CD14-positive monocyte (primary cell): ENCODE measurements at regions of chr20 and their contacts with region 1.

Region 1: GRCh38 chr20:53939572-53940359 is 130.6 kb downstream of the BCAS1 start:
- DNase-seq: peak; percentile 90 to 96 (median 96)
- H3K4me3 ChIP-seq: peak overlapping the region in 2 of 3 experiments; percentile 8 to 61
- H3K4me3 Mint-ChIP-seq: peak overlapping the region; percentile 60 to 63
- H3K27ac ChIP-seq: peak overlapping the region; percentile 2 to 90
- H3K27ac Mint-ChIP-seq: peak overlapping the region; percentile 80 to 94 (median 91)
- H3K4me1 ChIP-seq: peaks cover 81 to 87% of the 10 kb centered on the region in 2 donors
- H3K4me1 Mint-ChIP-seq: peaks cover 84% of the 10 kb centered on the region
- H3K27me3 ChIP-seq: no peaks in the 10 kb centered on the region
- H3K27me3 Mint-ChIP-seq: peaks cover 0 to 2% (median 2%) of the 10 kb centered on the region in 3 donors
- CTCF ChIP-seq: peak; percentile 86

Region 2: GRCh38 chr20:53738039-53738944 is 201.5 kb before region 1 on chr20:
- intact Hi-C with region 1: loop called in 1 of 2 experiments (anchors 10 kb)
- DNase-seq: no peak
- H3K4me3 ChIP-seq: peak overlapping the region in 1 of 3 experiments; percentile 59
- H3K4me3 Mint-ChIP-seq: no peak overlapping the region
- H3K27ac ChIP-seq: peak overlapping the region in 1 of 2 donors; percentile 84
- H3K27ac Mint-ChIP-seq: peak overlapping the region; percentile 91 to 99 (median 95)
- H3K4me1 ChIP-seq: peaks cover 71 to 72% of the 10 kb centered on the region in 2 donors
- H3K4me1 Mint-ChIP-seq: peaks cover 74% of the 10 kb centered on the region
- H3K27me3 ChIP-seq: no peaks in the 10 kb centered on the region
- H3K27me3 Mint-ChIP-seq: peaks cover 0 to 2% (median 1%) of the 10 kb centered on the region in 3 donors
- CTCF ChIP-seq: no peak

Region 3: GRCh38 chr20:53828682-53829254 is 111.0 kb before region 1 on chr20:
- intact Hi-C with region 1: no loop called
- DNase-seq: peak in 1 of 3 donors; percentile 12
- H3K4me3 ChIP-seq: peak overlapping the region; percentile 19 to 70 (median 47)
- H3K4me3 Mint-ChIP-seq: peak overlapping the region; percentile 56 to 88
- H3K27ac ChIP-seq: peak overlapping the region; percentile 32 to 92
- H3K27ac Mint-ChIP-seq: peak overlapping the region; percentile 1 to 94 (median 85)
- H3K4me1 ChIP-seq: peaks cover 40 to 52% of the 10 kb centered on the region in 2 donors
- H3K4me1 Mint-ChIP-seq: peaks cover 52% of the 10 kb centered on the region
- H3K27me3 ChIP-seq: no peaks in the 10 kb centered on the region
- H3K27me3 Mint-ChIP-seq: peaks cover 0 to 3% (median 1%) of the 10 kb centered on the region in 3 donors
- CTCF ChIP-seq: no peak

Region 4: DNA sequence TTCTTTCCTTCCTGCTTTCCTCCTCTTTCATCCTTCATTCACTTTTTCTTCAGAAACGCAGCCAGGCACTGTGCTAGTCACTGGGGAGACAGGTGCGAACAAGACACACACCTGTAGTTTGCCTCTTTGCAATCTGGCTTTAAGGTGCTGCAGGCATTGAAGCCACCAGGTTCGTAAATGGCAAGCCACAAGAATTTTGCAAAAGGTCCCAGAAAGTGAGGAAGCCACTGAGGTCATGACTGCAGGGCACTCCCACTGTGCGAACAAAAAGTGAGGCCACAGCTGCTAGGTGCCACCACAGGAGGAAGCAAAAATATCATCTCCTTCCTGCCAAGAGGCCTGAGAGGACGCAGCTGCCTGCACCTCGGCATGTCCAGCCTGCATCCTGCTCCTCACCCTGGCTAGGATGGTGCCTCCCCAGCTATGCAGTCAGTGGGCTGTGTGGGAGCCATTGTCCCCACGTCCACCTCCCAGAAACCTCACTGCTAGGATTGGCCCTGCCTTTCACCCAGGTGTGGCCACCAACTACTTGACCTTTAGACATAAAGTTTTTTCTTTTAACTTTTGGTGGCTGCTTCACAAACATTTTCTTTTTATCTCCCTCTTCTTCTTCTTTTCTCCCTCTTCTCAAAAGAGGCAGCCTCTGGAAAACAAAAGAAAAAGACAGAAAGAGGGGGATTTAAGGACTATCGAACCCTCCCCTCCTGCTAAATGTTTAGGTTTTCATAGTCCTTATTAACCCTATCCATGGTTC is 100.2 kb before region 1 on chr20:
- intact Hi-C with region 1: loop called in 1 of 2 experiments (anchors 10 kb)
- DNase-seq: peak; percentile 71 to 72 (median 71)
- H3K4me3 ChIP-seq: peak overlapping the region in 1 of 3 experiments; percentile 61
- H3K4me3 Mint-ChIP-seq: peak overlapping the region; percentile 58 to 78
- H3K27ac ChIP-seq: peak overlapping the region; percentile 74 to 84
- H3K27ac Mint-ChIP-seq: peak overlapping the region; percentile 82 to 97 (median 93)
- H3K4me1 ChIP-seq: peaks cover 50 to 62% of the 10 kb centered on the region in 2 donors
- H3K4me1 Mint-ChIP-seq: peaks cover 55% of the 10 kb centered on the region
- H3K27me3 ChIP-seq: no peaks in the 10 kb centered on the region
- H3K27me3 Mint-ChIP-seq: peaks cover 0 to 7% (median 0%) of the 10 kb centered on the region in 3 donors
- CTCF ChIP-seq: no peak

Region 5: GRCh38 chr20:53905019-53905847 is 34.5 kb before region 1 on chr20:
- intact Hi-C with region 1: loop called in 1 of 2 experiments (anchors 5 kb)
- DNase-seq: no peak
- H3K4me3 ChIP-seq: no peak overlapping the region
- H3K4me3 Mint-ChIP-seq: no peak overlapping the region
- H3K27ac ChIP-seq: peak overlapping the region; percentile 94 to 98
- H3K27ac Mint-ChIP-seq: peak overlapping the region; percentile 98 to 100 (median 100)
- H3K4me1 ChIP-seq: peaks cover 87 to 89% of the 10 kb centered on the region in 2 donors
- H3K4me1 Mint-ChIP-seq: peaks cover 79% of the 10 kb centered on the region
- H3K27me3 ChIP-seq: no peaks in the 10 kb centered on the region
- H3K27me3 Mint-ChIP-seq: peaks cover 0 to 5% (median 0%) of the 10 kb centered on the region in 3 donors
- CTCF ChIP-seq: no peak

Region 6: DNA sequence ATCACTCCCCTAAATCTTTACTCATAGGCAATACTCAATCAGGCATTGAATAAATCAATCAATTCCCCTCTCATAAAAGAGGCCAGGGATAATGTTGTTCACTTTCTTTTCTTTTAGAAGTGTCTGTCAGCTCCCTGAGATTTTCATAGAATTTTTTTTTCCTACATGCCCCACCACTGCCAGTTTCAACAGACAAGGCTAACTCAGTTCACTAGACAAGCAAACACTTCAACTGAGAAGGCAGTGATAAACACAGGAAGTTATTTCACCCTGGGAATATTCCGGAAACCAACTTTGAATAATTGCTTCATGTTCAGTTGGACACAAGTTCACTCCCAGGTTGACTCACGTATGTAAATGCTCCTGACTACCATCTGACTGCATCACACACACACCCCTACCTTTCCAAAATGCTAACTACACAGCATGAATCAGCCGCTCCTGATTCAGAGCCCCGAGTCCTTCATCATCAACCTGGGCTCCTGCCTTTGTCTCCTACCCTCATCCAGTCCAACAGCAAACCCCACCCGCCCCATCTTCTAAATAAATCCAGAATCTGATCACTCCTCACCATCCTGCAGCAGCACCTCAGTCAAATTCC is 13.2 kb before region 1 on chr20:
- intact Hi-C with region 1: no loop called
- DNase-seq: peak; percentile 92 to 99 (median 98)
- H3K4me3 ChIP-seq: peak overlapping the region in 1 of 3 experiments; percentile 39
- H3K4me3 Mint-ChIP-seq: peak overlapping the region in 1 of 2 donors; percentile 72
- H3K27ac ChIP-seq: peak overlapping the region; percentile 79 to 92
- H3K27ac Mint-ChIP-seq: peak overlapping the region; percentile 82 to 96 (median 94)
- H3K4me1 ChIP-seq: peaks cover 78 to 92% of the 10 kb centered on the region in 2 donors
- H3K4me1 Mint-ChIP-seq: peaks cover 79% of the 10 kb centered on the region
- H3K27me3 ChIP-seq: no peaks in the 10 kb centered on the region
- H3K27me3 Mint-ChIP-seq: peaks cover 0 to 2% (median 2%) of the 10 kb centered on the region in 3 donors
- CTCF ChIP-seq: no peak

Region 7: GRCh38 chr20:54014293-54014926 is 74.6 kb after region 1 on chr20:
- intact Hi-C with region 1: no loop called
- DNase-seq: no peak
- H3K4me3 ChIP-seq: no peak overlapping the region
- H3K4me3 Mint-ChIP-seq: no peak overlapping the region
- H3K27ac ChIP-seq: no peak overlapping the region
- H3K27ac Mint-ChIP-seq: no peak overlapping the region
- H3K4me1 ChIP-seq: peaks cover 22 to 26% of the 10 kb centered on the region in 2 donors
- H3K4me1 Mint-ChIP-seq: peaks cover 27% of the 10 kb centered on the region
- H3K27me3 ChIP-seq: no peaks in the 10 kb centered on the region
- H3K27me3 Mint-ChIP-seq: peaks cover 0 to 4% (median 2%) of the 10 kb centered on the region in 3 donors
- CTCF ChIP-seq: no peak

Region 8: DNA sequence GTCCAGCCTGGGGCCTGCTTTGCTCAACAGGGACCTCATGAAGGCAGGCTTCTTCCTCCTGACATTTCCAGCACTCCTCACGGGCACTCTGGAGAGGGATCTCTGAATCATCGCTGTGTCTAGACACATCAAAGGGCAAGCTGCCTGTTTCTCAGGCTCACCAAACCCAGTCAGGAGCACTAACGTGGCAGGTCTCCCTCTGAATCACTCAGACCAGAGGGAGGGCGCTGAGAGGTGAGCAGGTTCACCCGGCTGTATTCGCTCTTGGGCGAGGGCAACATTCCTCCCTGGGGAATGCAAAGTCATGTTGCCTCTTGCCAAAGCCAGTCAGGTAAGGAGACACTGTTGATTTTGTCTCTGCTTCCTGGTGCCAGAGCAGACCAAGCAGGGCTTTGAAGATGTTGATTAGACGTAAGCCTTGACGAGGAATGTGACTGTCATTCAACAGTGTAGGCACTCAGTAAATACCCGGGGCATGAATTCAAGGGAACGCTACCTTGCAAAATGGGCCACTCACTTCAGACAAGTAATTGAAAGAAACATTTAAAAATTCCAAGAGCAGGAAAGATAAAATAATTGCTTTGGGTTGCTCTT is 183.9 kb after region 1 on chr20:
- intact Hi-C with region 1: no loop called
- DNase-seq: peak; percentile 23 to 57 (median 35)
- H3K4me3 ChIP-seq: no peak overlapping the region
- H3K4me3 Mint-ChIP-seq: no peak overlapping the region
- H3K27ac ChIP-seq: peak overlapping the region in 1 of 2 donors; percentile 21
- H3K27ac Mint-ChIP-seq: peak overlapping the region in 4 of 7 donors; percentile 10 to 66 (median 42)
- H3K4me1 ChIP-seq: peaks cover 0 to 14% of the 10 kb centered on the region in 2 donors
- H3K4me1 Mint-ChIP-seq: peaks cover 18% of the 10 kb centered on the region
- H3K27me3 ChIP-seq: no peaks in the 10 kb centered on the region
- H3K27me3 Mint-ChIP-seq: peaks cover 0 to 1% (median 0%) of the 10 kb centered on the region in 3 donors
- CTCF ChIP-seq: no peak